ENCODE measurements at regions of chr19 and their contacts with region 1.

Region 1: DNA sequence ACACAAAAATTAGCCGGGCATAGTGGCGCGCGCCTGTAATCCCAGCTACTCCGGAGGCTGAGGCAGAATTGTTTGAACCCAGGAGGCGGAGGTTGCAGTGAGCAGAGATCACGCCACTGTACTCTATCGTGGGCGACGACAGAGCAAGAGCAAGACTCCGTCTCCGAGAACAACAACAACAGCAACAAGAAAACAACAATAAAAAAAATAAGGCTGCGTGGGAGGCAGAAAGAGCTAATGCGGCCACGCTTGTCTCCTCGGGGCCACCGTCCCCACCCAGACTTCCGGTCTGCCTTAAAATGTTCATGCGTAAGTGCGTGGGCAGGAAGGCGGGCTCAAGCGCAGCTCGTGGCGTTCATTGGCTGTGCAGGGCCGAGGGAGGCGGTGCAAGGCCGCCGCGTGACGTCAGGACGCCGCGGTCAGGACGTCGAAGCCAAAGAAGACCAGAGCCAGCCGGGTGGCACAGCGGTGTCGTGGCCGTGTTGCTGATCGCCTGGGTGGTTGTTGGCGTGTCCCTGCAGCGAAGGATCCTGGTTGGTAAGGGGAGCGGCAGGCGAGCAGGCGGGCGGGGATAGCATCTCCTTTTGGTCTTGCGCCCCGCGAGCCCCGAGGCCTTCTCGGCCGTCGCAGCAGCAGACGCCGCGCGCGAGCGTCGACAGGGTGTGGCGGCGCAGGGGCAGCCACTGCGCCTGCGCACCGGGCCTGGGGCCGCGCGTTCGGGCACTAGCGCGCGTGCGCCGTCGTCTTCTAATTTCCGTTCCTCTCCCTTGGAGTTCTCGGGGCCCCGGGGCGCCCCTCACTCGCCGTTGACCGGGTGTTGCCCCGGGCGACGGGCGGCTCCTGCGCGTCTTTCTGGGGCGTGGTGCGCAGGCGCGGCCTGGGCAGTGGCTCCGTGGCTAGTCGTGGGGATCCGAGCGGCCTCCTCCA is at the start of gene LENG8:
- DNase-seq: peak; percentile 94 to 98 (median 96)
- ATAC-seq: peak; percentile 92
- H3K4me3 ChIP-seq: peak within 1 kb of the TSS; percentile 72
- H3K27ac ChIP-seq: peak within 1 kb of the TSS; percentile 97
- H3K4me1 ChIP-seq: peaks cover 19 to 34% of the 10 kb centered on the region in 2 experiments; a peak in 4 of 5 replicates
- H3K27me3 ChIP-seq: no peaks in the 10 kb centered on the region
- CTCF ChIP-seq: no peak; a peak in 1 of 6 replicates
- EP300 ChIP-seq: 0 out of 2 replicates have a peak, but pooled peaks have one; percentile 25
- POLR2A ChIP-seq: peak; percentile 98
- RAD21 ChIP-seq: 0 out of 4 replicates have a peak, but pooled peaks of 1 of the 2 experiments have one; percentile 3
- polyA plus RNA-seq, gene LENG8: 0.74 to 2.3 TPM

Region 2: GRCh38 chr19:54430306-54431254 is 18.5 kb before region 1 on chr19:
- CTCF ChIA-PET with region 1: no interaction called
- POLR2A ChIA-PET with region 1: interaction called, 14 read pairs
- in situ Hi-C with region 1: no loop called
- intact Hi-C with region 1: no loop called
- DNase-seq: peak; percentile 63 to 87 (median 82)
- ATAC-seq: peak; percentile 94
- H3K4me3 ChIP-seq: no peak overlapping the region
- H3K27ac ChIP-seq: no peak overlapping the region
- H3K4me1 ChIP-seq: peaks cover 0 to 33% of the 10 kb centered on the region in 2 experiments; a peak in 2 of 5 replicates
- H3K27me3 ChIP-seq: peaks cover 8 to 24% of the 10 kb centered on the region in 2 experiments; a peak in 4 of 5 replicates
- CTCF ChIP-seq: peak; percentile 13 to 43 (median 32); a peak in 3 of 6 replicates
- EP300 ChIP-seq: no peak
- POLR2A ChIP-seq: no peak
- RAD21 ChIP-seq: peak in 1 of 2 experiments; percentile 33; a peak in 1 of 4 replicates

Region 3: GRCh38 chr19:54463531-54464043 is 14.6 kb after region 1 on chr19 and contains the start of gene LENG9:
- CTCF ChIA-PET with region 1: no interaction called
- POLR2A ChIA-PET with region 1: interaction called, 34 read pairs
- in situ Hi-C with region 1: no loop called
- intact Hi-C with region 1: loop called (anchors 1 kb)
- DNase-seq: peak; percentile 82 to 99 (median 88)
- ATAC-seq: peak; percentile 80
- H3K4me3 ChIP-seq: peak within 1 kb of the TSS; percentile 85
- H3K27ac ChIP-seq: peak within 1 kb of the TSS; percentile 95
- H3K4me1 ChIP-seq: peaks cover 0 to 38% of the 10 kb centered on the region in 2 experiments; a peak in 2 of 5 replicates
- H3K27me3 ChIP-seq: no peaks in the 10 kb centered on the region
- CTCF ChIP-seq: no peak
- EP300 ChIP-seq: no peak
- POLR2A ChIP-seq: peak; percentile 54
- RAD21 ChIP-seq: no peak
- polyA plus RNA-seq, gene LENG9: 0.23 to 0.34 TPM

Region 4: GRCh38 chr19:54502518-54503048 is 53.5 kb after region 1 on chr19 and contains the start of gene LAIR2:
- CTCF ChIA-PET with region 1: no interaction called
- POLR2A ChIA-PET with region 1: no interaction called
- in situ Hi-C with region 1: no loop called
- intact Hi-C with region 1: no loop called
- DNase-seq: no peak
- ATAC-seq: no peak
- H3K4me3 ChIP-seq: no peak within 1 kb of the TSS
- H3K27ac ChIP-seq: no peak within 1 kb of the TSS
- H3K4me1 ChIP-seq: no peaks in the 10 kb centered on the region
- H3K27me3 ChIP-seq: peaks cover 25 to 34% of the 10 kb centered on the region in 2 experiments
- CTCF ChIP-seq: no peak
- EP300 ChIP-seq: no peak
- POLR2A ChIP-seq: no peak
- RAD21 ChIP-seq: no peak
- polyA plus RNA-seq, gene LAIR2: not detected

Region 5: GRCh38 chr19:54517483-54517882 is 68.4 kb after region 1 on chr19:
- CTCF ChIA-PET with region 1: no interaction called
- POLR2A ChIA-PET with region 1: no interaction called
- in situ Hi-C with region 1: no loop called
- intact Hi-C with region 1: no loop called
- DNase-seq: peak; percentile 73 to 82 (median 78)
- ATAC-seq: peak; percentile 93
- H3K4me3 ChIP-seq: no peak overlapping the region
- H3K27ac ChIP-seq: no peak overlapping the region
- H3K4me1 ChIP-seq: peaks cover 3 to 15% of the 10 kb centered on the region in 2 experiments; a peak in 3 of 5 replicates
- H3K27me3 ChIP-seq: peaks cover 0 to 24% of the 10 kb centered on the region in 2 experiments; a peak in 3 of 5 replicates
- CTCF ChIP-seq: no peak
- EP300 ChIP-seq: no peak
- POLR2A ChIP-seq: no peak
- RAD21 ChIP-seq: no peak

Region 6: GRCh38 chr19:56350416-56351045 is 1901.5 kb after region 1 on chr19:
- CTCF ChIA-PET with region 1: no interaction called
- POLR2A ChIA-PET with region 1: no interaction called
- in situ Hi-C with region 1: no loop called
- intact Hi-C with region 1: no loop called
- DNase-seq: peak; percentile 33 to 76 (median 52)
- ATAC-seq: peak; percentile 63
- H3K4me3 ChIP-seq: no peak overlapping the region
- H3K27ac ChIP-seq: no peak overlapping the region
- H3K4me1 ChIP-seq: peaks cover 12 to 23% of the 10 kb centered on the region in 2 experiments
- H3K27me3 ChIP-seq: no peaks in the 10 kb centered on the region
- CTCF ChIP-seq: peak; percentile 74 to 88 (median 75)
- EP300 ChIP-seq: no peak
- POLR2A ChIP-seq: no peak
- RAD21 ChIP-seq: peak; percentile 66 to 82